ENCODE measurements at regions of chr6 and their contacts with region 1.

Region 1: GRCh38 chr6:39347906-39348585 is 25.5 kb upstream of the KCNK16 start:
- H3K4me3 ChIP-seq: no peak overlapping the region
- H3K27ac ChIP-seq: no peak overlapping the region
- H3K4me1 ChIP-seq: no peaks in the 10 kb centered on the region
- CTCF ChIP-seq: peak; percentile 73

Region 2: GRCh38 chr6:39302669-39303424 is 45.2 kb before region 1 on chr6:
- CTCF ChIA-PET with region 1: no interaction called
- POLR2A ChIA-PET with region 1: no interaction called
- H3K4me3 ChIP-seq: no peak overlapping the region
- H3K27ac ChIP-seq: no peak overlapping the region
- H3K4me1 ChIP-seq: no peaks in the 10 kb centered on the region
- CTCF ChIP-seq: peak; percentile 96

Region 3: DNA sequence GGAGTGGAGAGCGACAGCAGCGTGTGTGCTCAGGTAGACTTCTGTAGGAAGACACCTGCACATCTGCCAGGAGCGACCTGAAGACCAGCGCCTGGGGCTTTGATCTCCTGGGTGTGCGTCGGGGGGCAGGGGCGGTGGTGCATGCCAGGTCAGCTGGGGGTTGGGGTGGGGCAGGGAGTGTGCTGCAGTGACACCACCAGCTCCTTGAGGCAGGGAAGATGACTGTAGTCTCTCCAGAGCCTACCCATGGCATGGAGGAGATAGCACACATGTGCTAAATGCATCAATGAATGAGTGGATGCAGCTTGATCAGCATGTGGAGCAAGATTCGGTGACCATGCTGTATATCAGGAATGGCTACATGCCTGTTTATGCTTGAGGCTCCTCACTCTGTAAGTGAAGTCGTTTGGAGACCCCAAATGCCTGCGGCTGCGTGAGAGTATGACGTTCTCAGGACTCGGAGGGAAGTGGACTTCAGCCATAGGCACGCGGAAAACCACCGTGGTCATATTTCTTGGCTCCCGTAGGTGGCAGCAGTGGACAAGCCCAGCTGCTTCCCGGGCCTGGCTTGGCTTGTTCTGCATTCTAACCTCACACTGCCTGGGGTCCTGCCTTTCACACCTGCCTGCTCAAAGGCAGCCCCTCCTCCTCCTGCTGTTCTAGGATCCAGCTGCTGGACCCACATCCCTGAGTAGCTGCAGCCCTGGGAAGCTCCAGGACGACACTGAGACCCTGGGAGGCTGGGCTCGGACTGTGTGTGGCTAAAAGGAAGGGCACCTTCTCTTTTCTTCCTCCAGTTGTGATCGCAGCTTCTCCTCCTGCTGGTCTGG is 13.8 kb after region 1 on chr6:
- CTCF ChIA-PET with region 1: interaction called, 24 read pairs
- POLR2A ChIA-PET with region 1: no interaction called
- H3K4me3 ChIP-seq: no peak overlapping the region
- H3K27ac ChIP-seq: no peak overlapping the region
- H3K4me1 ChIP-seq: no peaks in the 10 kb centered on the region
- CTCF ChIP-seq: peak; percentile 80

Region 4: GRCh38 chr6:39369987-39370386 is 21.9 kb after region 1 on chr6:
- CTCF ChIA-PET with region 1: interaction called, 12 read pairs
- POLR2A ChIA-PET with region 1: no interaction called
- H3K4me3 ChIP-seq: no peak overlapping the region
- H3K27ac ChIP-seq: no peak overlapping the region
- H3K4me1 ChIP-seq: no peaks in the 10 kb centered on the region
- CTCF ChIP-seq: no peak

Region 5: DNA sequence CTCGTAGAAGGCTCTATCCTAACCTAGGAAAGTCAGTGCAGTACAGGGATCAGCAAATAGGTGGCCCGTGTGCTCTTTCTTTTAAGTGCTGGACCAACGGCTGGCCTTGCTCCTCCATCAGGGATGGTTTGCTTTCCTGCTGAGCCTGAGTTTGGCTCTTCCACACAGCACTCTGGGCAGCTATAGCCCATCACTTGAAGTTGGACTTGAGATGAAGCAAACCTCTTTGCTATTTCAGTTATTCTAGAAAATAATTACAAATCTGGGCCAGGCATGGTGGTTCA is 41.4 kb after region 1 on chr6:
- CTCF ChIA-PET with region 1: interaction called, 10 read pairs
- POLR2A ChIA-PET with region 1: no interaction called
- H3K4me3 ChIP-seq: no peak overlapping the region
- H3K27ac ChIP-seq: no peak overlapping the region
- H3K4me1 ChIP-seq: no peaks in the 10 kb centered on the region
- CTCF ChIP-seq: no peak

Measured in HEK293 (cell line).